T-cell (primary cell): ENCODE measurements at regions of chr2 and their contacts with region 1.

Region 1: DNA sequence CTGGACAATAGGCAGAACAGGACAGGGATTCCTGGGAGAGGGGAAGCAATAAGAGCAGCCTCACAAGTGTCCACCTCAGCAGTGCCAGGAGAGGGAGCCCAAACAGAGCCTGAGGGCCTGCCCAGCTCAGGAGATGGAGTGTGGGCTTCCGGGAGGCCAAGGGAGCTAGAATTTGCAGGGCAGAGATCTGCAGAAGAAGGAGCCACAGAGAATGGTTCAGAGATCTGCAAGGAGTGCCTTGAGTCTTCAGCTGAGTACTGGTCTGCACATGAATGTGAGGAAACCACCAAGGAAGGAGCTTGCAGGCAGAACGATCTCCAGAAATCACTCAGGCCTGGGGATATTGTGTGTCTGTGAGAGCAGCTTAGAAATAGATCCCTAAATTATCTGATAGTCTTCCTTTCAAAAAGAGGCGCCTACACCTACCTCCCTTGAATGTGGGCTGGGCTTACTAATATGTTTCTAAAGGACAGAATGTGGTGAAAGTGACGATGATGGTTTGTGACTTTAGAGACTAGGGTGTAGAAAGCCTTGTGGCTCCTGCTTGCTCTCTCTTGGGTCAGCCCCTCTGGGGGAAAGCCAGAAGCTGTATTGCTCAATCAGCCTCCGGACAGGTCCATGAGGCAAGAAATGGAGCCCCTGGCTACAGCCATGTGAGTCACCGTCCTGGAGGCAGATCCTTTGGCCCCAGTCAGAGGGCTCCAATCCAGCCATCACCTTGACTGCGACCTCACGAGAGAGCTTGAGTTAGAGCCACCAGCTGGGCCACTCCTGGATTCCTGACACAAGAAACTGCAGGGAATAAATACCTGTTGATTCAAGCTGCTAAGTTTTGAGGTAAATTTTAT is 7.6 kb upstream of the LPIN1 start:
- DNase-seq: peak in 6 of 35 experiments; percentile 9 to 62 (median 28)
- ATAC-seq: peak in 3 of 4 experiments; percentile 58 to 76 (median 74)
- H3K4me3 ChIP-seq: no peak overlapping the region
- H3K4me3 Mint-ChIP-seq: no peak overlapping the region
- H3K27ac ChIP-seq: no peak overlapping the region
- H3K27ac Mint-ChIP-seq: peak overlapping the region in 1 of 2 donors; percentile 28
- H3K4me1 ChIP-seq: peaks cover 0 to 13% of the 10 kb centered on the region in 2 experiments
- H3K4me1 Mint-ChIP-seq: peaks cover 2 to 23% (median 9%) of the 10 kb centered on the region in 3 donors
- H3K27me3 ChIP-seq: peaks cover 0 to 6% of the 10 kb centered on the region in 2 experiments
- H3K27me3 Mint-ChIP-seq: peaks cover 6% of the 10 kb centered on the region in 2 donors

Region 2: GRCh38 chr2:10971881-10972260 is 766.9 kb before region 1 on chr2:
- CTCF ChIA-PET with region 1: no interaction called
- POLR2A ChIA-PET with region 1: no interaction called
- DNase-seq: no peak
- ATAC-seq: no peak
- H3K4me3 ChIP-seq: no peak overlapping the region
- H3K4me3 Mint-ChIP-seq: no peak overlapping the region
- H3K27ac ChIP-seq: no peak overlapping the region
- H3K27ac Mint-ChIP-seq: no peak overlapping the region
- H3K4me1 ChIP-seq: no peaks in the 10 kb centered on the region
- H3K4me1 Mint-ChIP-seq: peaks cover 0 to 2% (median 1%) of the 10 kb centered on the region in 3 donors
- H3K27me3 ChIP-seq: peaks cover 0 to 37% of the 10 kb centered on the region in 2 experiments
- H3K27me3 Mint-ChIP-seq: peaks cover 16 to 36% of the 10 kb centered on the region in 2 donors

Region 3: GRCh38 chr2:11753886-11754699 is 15.3 kb after region 1 on chr2:
- CTCF ChIA-PET with region 1: interaction called in 1 of 2 experiments, 12 read pairs
- POLR2A ChIA-PET with region 1: no interaction called
- DNase-seq: peak in 26 of 35 experiments; percentile 21 to 71 (median 46)
- ATAC-seq: peak; percentile 49 to 84 (median 78)
- H3K4me3 ChIP-seq: peak overlapping the region; percentile 41 to 57
- H3K4me3 Mint-ChIP-seq: peak overlapping the region; percentile 68 to 83 (median 77)
- H3K27ac ChIP-seq: peak overlapping the region; percentile 89
- H3K27ac Mint-ChIP-seq: peak overlapping the region; percentile 86 to 93
- H3K4me1 ChIP-seq: peaks cover 28 to 79% of the 10 kb centered on the region in 2 experiments
- H3K4me1 Mint-ChIP-seq: peaks cover 79 to 94% (median 94%) of the 10 kb centered on the region in 3 donors
- H3K27me3 ChIP-seq: no peaks in the 10 kb centered on the region
- H3K27me3 Mint-ChIP-seq: no peaks in the 10 kb centered on the region

Region 4: GRCh38 chr2:12057436-12058166 is 318.8 kb after region 1 on chr2:
- CTCF ChIA-PET with region 1: no interaction called
- POLR2A ChIA-PET with region 1: no interaction called
- DNase-seq: peak in 30 of 35 experiments; percentile 7 to 55 (median 30)
- ATAC-seq: peak; percentile 43 to 88 (median 68)
- H3K4me3 ChIP-seq: no peak overlapping the region
- H3K4me3 Mint-ChIP-seq: no peak overlapping the region
- H3K27ac ChIP-seq: no peak overlapping the region
- H3K27ac Mint-ChIP-seq: no peak overlapping the region
- H3K4me1 ChIP-seq: peaks cover 0 to 23% of the 10 kb centered on the region in 2 experiments
- H3K4me1 Mint-ChIP-seq: peaks cover 24 to 35% (median 29%) of the 10 kb centered on the region in 3 donors
- H3K27me3 ChIP-seq: peaks cover 0 to 10% of the 10 kb centered on the region in 2 experiments
- H3K27me3 Mint-ChIP-seq: peaks cover 0 to 8% of the 10 kb centered on the region in 2 donors